Prostate gland (tissue), 2 donors: ENCODE measurements at regions of chr17 and their contacts with region 1.

Region 1: DNA sequence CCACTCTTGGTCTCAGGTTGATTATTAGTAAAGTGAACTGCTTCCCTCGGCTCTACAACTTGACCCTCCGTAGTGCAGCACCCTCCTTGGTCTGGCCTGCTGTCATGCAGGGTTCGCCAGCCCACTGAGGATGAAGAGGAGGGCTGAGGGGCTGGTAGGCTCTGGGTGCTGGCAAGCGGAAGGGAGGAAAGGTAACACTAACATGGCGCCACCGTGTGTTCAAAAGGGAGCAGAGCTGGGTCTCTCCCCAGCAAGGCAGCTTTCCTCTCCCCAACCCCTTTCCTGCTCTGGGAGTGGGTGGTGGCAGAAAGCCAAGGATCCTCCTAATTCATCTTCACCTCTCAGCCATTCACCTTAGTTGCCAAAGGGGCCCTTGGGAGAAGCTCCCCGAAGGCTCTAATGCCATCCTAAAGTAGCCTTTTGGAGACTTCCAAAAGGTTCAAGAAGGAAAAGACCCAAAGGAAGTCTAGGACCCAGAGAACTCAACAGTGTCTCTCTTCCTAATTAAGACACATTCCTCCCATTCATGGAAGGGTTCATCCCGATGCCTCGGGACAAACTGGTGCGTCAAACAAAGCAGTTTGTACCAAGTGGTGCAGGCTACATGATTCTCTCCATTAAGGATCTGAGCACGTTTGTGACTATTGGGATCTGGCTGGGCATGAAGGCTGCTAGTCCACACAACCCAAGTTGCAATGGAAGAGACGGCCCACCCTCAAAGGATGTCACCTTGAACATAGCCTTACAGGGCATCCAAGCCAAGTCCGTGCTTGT is 90.8 kb upstream of the TOB1 start:
- DNase-seq: peak; percentile 56
- H3K4me3 ChIP-seq: no peak overlapping the region
- H3K27ac ChIP-seq: peak overlapping the region in 1 of 2 donors; percentile 45
- H3K4me1 ChIP-seq: peaks cover 3% of the 10 kb centered on the region
- H3K27me3 ChIP-seq: no peaks in the 10 kb centered on the region
- CTCF ChIP-seq: peak; percentile 34 to 78 (median 69)
- POLR2A ChIP-seq: no peak

Region 2: DNA sequence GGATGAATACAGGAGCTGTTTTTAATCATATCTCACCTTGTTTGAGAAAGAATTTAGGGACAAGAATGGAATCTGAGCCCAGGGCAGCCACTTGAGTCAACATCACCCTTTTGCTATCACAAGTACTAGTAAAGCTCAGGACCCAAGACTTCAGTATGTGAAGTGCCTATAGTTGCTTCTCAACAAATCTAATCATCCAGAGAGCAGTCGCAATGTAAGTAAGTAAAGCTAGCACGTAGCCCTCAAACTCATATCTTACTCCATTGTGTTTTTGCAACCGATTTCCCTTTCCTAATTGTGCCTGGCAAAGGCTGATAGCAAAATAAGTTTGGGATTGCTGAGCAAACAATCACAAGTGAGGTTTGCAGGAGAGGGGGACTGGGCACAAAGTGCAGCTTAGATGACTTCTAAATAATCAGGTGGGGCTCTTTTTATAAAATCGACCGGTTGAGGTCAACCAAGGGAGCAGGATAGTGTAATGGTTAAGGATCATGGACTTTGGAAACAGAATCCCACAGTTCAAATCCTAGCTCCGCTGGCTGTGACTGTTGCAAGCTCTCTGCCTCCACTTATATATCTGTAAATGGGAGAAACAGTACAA is 103.8 kb before region 1 on chr17:
- intact Hi-C with region 1: loop called (anchors 1 kb)
- DNase-seq: no peak
- H3K4me3 ChIP-seq: no peak overlapping the region
- H3K27ac ChIP-seq: peak overlapping the region in 1 of 2 donors; percentile 59
- H3K4me1 ChIP-seq: peaks cover 2% of the 10 kb centered on the region
- H3K27me3 ChIP-seq: no peaks in the 10 kb centered on the region
- CTCF ChIP-seq: no peak
- POLR2A ChIP-seq: no peak

Region 3: GRCh38 chr17:50865984-50866774 is 90.8 kb before region 1 on chr17 and contains the start of gene TOB1:
- intact Hi-C with region 1: loop called (anchors 2 kb)
- DNase-seq: peak; percentile 98
- H3K4me3 ChIP-seq: peak within 1 kb of the TSS; percentile 79 to 98
- H3K27ac ChIP-seq: peak within 1 kb of the TSS; percentile 100
- H3K4me1 ChIP-seq: no peaks in the 10 kb centered on the region
- H3K27me3 ChIP-seq: no peaks in the 10 kb centered on the region
- CTCF ChIP-seq: no peak
- POLR2A ChIP-seq: peak; percentile 99
- total RNA-seq, gene TOB1: 37.1 to 64.7 TPM